CD4-positive, alpha-beta memory T cell (primary cell): ENCODE measurements at regions of chr15 and their contacts with region 1.

Region 1: DNA sequence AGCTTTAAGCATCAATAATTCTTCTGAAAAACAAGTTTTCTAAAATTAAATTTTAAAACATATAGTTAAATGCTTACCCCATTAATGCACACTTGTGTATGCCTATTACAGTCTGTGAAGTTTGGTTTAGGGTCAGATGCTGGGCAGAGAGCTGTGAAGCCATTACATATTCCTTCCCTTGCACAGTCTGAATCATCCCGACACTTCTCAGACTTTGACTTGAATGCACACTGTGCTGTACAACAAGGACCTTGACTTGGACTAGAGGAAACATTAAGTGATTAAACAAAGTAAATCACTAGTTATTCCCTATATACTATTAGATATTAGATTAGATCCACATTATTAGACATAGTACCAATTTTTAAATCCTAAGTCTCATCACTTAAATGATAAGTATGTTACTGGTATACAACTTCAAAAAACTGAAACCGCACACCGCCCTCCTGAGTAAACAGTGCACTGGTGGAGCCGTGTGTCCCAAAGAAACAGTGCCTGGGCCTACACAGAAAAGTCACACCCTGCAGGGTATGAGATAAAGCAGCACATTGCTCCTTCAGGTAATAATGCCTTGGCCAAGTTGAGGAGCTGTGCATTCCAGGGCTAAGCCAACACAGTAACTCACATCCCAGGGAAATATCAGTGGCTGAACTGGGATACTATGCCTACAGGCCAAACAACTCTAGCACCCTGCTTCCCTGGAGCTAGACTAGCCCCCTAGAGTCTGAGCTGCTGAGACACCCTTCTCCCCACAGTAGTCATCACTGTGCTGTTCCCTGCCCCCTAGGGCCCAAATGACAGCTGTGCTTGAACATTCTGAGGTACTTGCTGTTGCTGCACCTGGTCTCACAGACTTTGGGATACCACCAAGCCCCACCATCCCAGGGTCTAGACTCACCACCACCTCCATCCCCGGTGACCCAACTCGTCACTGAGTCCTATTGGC is 137.5 kb downstream of the ADAM10 start:
- DNase-seq: no peak
- H3K4me3 ChIP-seq: no peak overlapping the region
- H3K4me3 Mint-ChIP-seq: no peak overlapping the region
- H3K27ac ChIP-seq: no peak overlapping the region
- H3K27ac Mint-ChIP-seq: no peak overlapping the region
- H3K4me1 ChIP-seq: peaks cover 18% of the 10 kb centered on the region
- H3K4me1 Mint-ChIP-seq: peaks cover 16 to 38% (median 34%) of the 10 kb centered on the region in 4 donors
- H3K27me3 ChIP-seq: no peaks in the 10 kb centered on the region
- H3K27me3 Mint-ChIP-seq: no peaks in the 10 kb centered on the region

Region 2: GRCh38 chr15:58517682-58518525 is 94.1 kb before region 1 on chr15:
- CTCF ChIA-PET with region 1: no interaction called
- POLR2A ChIA-PET with region 1: no interaction called
- intact Hi-C with region 1: no loop called
- DNase-seq: peak in 1 of 5 donors; percentile 12
- H3K4me3 ChIP-seq: no peak overlapping the region
- H3K4me3 Mint-ChIP-seq: peak overlapping the region in 4 of 8 donors; percentile 23 to 68 (median 30)
- H3K27ac ChIP-seq: no peak overlapping the region
- H3K27ac Mint-ChIP-seq: peak overlapping the region in 4 of 7 donors; percentile 38 to 90 (median 62)
- H3K4me1 ChIP-seq: peaks cover 25% of the 10 kb centered on the region
- H3K4me1 Mint-ChIP-seq: peaks cover 14 to 36% (median 26%) of the 10 kb centered on the region in 4 donors
- H3K27me3 ChIP-seq: no peaks in the 10 kb centered on the region
- H3K27me3 Mint-ChIP-seq: peaks cover 2 to 3% of the 10 kb centered on the region in 2 donors

Region 3: GRCh38 chr15:58551764-58552504 is 60.1 kb before region 1 on chr15:
- CTCF ChIA-PET with region 1: no interaction called
- POLR2A ChIA-PET with region 1: no interaction called
- intact Hi-C with region 1: loop called (anchors 10 kb)
- DNase-seq: no peak
- H3K4me3 ChIP-seq: no peak overlapping the region
- H3K4me3 Mint-ChIP-seq: peak overlapping the region in 5 of 8 donors; percentile 28 to 75 (median 56)
- H3K27ac ChIP-seq: no peak overlapping the region
- H3K27ac Mint-ChIP-seq: peak overlapping the region in 4 of 7 donors; percentile 53 to 90 (median 78)
- H3K4me1 ChIP-seq: no peaks in the 10 kb centered on the region
- H3K4me1 Mint-ChIP-seq: peaks cover 5 to 14% (median 10%) of the 10 kb centered on the region in 4 donors
- H3K27me3 ChIP-seq: no peaks in the 10 kb centered on the region
- H3K27me3 Mint-ChIP-seq: peaks cover 0 to 1% of the 10 kb centered on the region in 2 donors

Region 4: GRCh38 chr15:58793862-58794261 is 181.9 kb after region 1 on chr15:
- CTCF ChIA-PET with region 1: no interaction called
- POLR2A ChIA-PET with region 1: no interaction called
- intact Hi-C with region 1: no loop called
- DNase-seq: no peak
- H3K4me3 ChIP-seq: no peak overlapping the region
- H3K4me3 Mint-ChIP-seq: no peak overlapping the region
- H3K27ac ChIP-seq: no peak overlapping the region
- H3K27ac Mint-ChIP-seq: peak overlapping the region in 1 of 7 donors; percentile 14
- H3K4me1 ChIP-seq: no peaks in the 10 kb centered on the region
- H3K4me1 Mint-ChIP-seq: peaks cover 12 to 29% (median 20%) of the 10 kb centered on the region in 4 donors
- H3K27me3 ChIP-seq: no peaks in the 10 kb centered on the region
- H3K27me3 Mint-ChIP-seq: no peaks in the 10 kb centered on the region